ENCODE measurements at regions of chr14 and their contacts with region 1.

Region 1: GRCh38 chr14:50003213-50004031 is 110.5 kb downstream of the ARF6 start:
- DNase-seq: peak; percentile 41 to 89 (median 70)
- ATAC-seq: peak; percentile 13
- H3K4me3 ChIP-seq: peak overlapping the region; percentile 61
- H3K4me3 Mint-ChIP-seq: peak overlapping the region; percentile 91
- H3K27ac ChIP-seq: peak overlapping the region; percentile 95 to 96
- H3K27ac Mint-ChIP-seq: peak overlapping the region; percentile 95
- H3K4me1 ChIP-seq: peaks cover 65% of the 10 kb centered on the region
- H3K4me1 Mint-ChIP-seq: peaks cover 59% of the 10 kb centered on the region
- H3K27me3 ChIP-seq: no peaks in the 10 kb centered on the region
- H3K27me3 Mint-ChIP-seq: no peaks in the 10 kb centered on the region
- CTCF ChIP-seq: peak; percentile 26

Region 2: GRCh38 chr14:49796025-49796424 is 207.4 kb before region 1 on chr14:
- CTCF ChIA-PET with region 1: no interaction called
- POLR2A ChIA-PET with region 1: no interaction called
- intact Hi-C with region 1: no loop called
- DNase-seq: no peak
- ATAC-seq: no peak
- H3K4me3 ChIP-seq: no peak overlapping the region
- H3K4me3 Mint-ChIP-seq: no peak overlapping the region
- H3K27ac ChIP-seq: no peak overlapping the region
- H3K27ac Mint-ChIP-seq: no peak overlapping the region
- H3K4me1 ChIP-seq: no peaks in the 10 kb centered on the region
- H3K4me1 Mint-ChIP-seq: no peaks in the 10 kb centered on the region
- H3K27me3 ChIP-seq: no peaks in the 10 kb centered on the region
- H3K27me3 Mint-ChIP-seq: no peaks in the 10 kb centered on the region
- CTCF ChIP-seq: no peak

Region 3: DNA sequence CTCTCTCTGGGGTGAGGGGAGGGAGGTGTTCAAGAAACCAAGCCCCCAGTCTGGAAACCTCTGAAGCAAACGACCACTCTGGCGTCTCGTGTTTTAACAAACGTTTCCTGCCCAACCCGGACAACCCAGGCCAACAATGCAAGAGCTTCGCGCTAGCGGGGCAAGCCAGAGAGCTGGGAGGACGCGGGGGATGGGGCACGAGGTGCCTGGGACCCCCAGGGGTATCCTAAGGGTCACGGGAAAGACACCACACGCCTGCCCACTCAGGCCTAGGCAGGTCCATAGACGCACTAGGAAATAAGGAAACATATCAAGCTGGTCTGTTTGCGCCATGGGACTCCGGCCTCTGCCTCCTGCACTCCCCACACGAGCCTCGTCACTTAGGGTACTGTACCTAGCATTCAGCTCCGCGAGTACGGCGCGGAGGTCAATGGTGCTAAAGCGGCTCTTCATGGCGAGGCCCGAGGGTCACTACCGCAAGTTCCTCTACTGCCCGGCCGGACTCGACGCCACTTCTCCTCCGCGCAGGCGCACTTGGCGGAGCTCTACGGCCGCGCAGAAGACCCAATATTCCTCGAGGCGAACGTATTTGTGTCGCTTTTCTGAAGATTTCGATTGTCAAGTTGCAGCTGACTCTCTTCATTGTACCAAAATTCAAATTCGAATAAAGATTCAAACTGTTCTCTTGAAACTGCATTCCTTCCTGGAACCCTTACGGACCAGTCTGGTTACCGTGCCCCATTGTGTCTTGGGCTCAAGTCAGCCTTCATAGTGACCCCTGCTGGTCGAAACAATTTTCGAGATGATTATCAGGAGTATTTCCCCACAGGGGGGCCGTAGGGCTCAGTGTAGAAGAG is 150.9 kb before region 1 on chr14 and contains the start of gene NEMF:
- CTCF ChIA-PET with region 1: interaction called, 29 read pairs
- POLR2A ChIA-PET with region 1: interaction called, 31 read pairs
- intact Hi-C with region 1: no loop called
- DNase-seq: peak; percentile 67 to 91 (median 72)
- ATAC-seq: peak; percentile 75
- H3K4me3 ChIP-seq: peak within 1 kb of the TSS; percentile 97
- H3K4me3 Mint-ChIP-seq: peak within 1 kb of the TSS; percentile 99
- H3K27ac ChIP-seq: peak within 1 kb of the TSS; percentile 64 to 80
- H3K27ac Mint-ChIP-seq: peak within 1 kb of the TSS; percentile 91
- H3K4me1 ChIP-seq: peaks cover 17% of the 10 kb centered on the region
- H3K4me1 Mint-ChIP-seq: peaks cover 46% of the 10 kb centered on the region
- H3K27me3 ChIP-seq: no peaks in the 10 kb centered on the region
- H3K27me3 Mint-ChIP-seq: no peaks in the 10 kb centered on the region
- CTCF ChIP-seq: peak; percentile 89
- total RNA-seq, gene NEMF: 96.0 to 97.7 TPM

Region 4: DNA sequence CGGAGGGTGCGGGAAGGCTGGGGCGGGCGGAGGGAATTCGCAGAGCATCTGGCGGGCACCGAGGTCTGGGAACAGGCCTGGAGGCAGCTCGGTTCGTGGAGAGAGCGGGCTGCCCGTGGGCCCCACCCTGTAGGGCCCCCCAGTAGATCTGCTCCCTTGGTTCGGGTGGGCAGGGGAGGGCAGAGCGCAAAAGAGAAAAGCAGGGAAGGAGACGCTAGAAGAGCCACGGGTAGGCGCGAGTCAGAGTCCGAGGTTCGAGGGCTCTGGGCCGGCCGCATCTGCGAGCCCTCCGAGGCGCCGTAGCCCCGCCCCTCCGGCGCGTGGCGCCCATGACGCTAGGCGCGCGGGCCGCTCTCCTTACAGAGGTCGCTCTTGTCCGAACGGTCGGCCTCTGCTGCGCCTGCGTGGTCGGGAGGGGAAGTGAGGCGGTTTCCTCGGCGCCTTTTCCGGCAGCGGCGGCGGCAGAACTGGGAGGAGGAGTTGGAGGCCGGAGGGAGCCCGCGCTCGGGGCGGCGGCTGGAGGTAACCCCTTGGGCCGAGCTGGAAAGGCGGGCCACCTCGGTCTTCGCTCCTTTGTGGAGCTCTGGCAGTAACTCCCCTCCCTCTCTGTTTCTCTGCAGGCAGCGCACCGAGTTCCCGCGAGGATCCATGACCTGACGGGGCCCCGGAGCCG is 110.7 kb before region 1 on chr14 and contains the start of gene ARF6:
- CTCF ChIA-PET with region 1: interaction called, 4 read pairs
- POLR2A ChIA-PET with region 1: interaction called, 78 read pairs
- intact Hi-C with region 1: loop called (anchors 1 to 2 kb)
- DNase-seq: peak; percentile 86 to 98 (median 96)
- ATAC-seq: peak; percentile 69
- H3K4me3 ChIP-seq: peak within 1 kb of the TSS; percentile 96
- H3K4me3 Mint-ChIP-seq: peak within 1 kb of the TSS; percentile 98
- H3K27ac ChIP-seq: peak within 1 kb of the TSS; percentile 93 to 99
- H3K27ac Mint-ChIP-seq: peak within 1 kb of the TSS; percentile 96
- H3K4me1 ChIP-seq: peaks cover 19% of the 10 kb centered on the region
- H3K4me1 Mint-ChIP-seq: peaks cover 43% of the 10 kb centered on the region
- H3K27me3 ChIP-seq: no peaks in the 10 kb centered on the region
- H3K27me3 Mint-ChIP-seq: no peaks in the 10 kb centered on the region
- CTCF ChIP-seq: no peak
- total RNA-seq, gene ARF6: 67.2 to 69.7 TPM

Region 5: GRCh38 chr14:49946320-49947141 is 56.9 kb before region 1 on chr14:
- CTCF ChIA-PET with region 1: interaction called, 3 read pairs
- POLR2A ChIA-PET with region 1: interaction called, 40 read pairs
- intact Hi-C with region 1: loop called in 1 of 2 experiments (anchors 2 kb)
- DNase-seq: peak in 10 of 14 experiments; percentile 10 to 66 (median 26)
- ATAC-seq: peak; percentile 72
- H3K4me3 ChIP-seq: no peak overlapping the region
- H3K4me3 Mint-ChIP-seq: peak overlapping the region; percentile 56
- H3K27ac ChIP-seq: peak overlapping the region; percentile 69 to 86
- H3K27ac Mint-ChIP-seq: peak overlapping the region; percentile 88
- H3K4me1 ChIP-seq: peaks cover 66% of the 10 kb centered on the region
- H3K4me1 Mint-ChIP-seq: peaks cover 78% of the 10 kb centered on the region
- H3K27me3 ChIP-seq: no peaks in the 10 kb centered on the region
- H3K27me3 Mint-ChIP-seq: no peaks in the 10 kb centered on the region
- CTCF ChIP-seq: no peak

Region 6: DNA sequence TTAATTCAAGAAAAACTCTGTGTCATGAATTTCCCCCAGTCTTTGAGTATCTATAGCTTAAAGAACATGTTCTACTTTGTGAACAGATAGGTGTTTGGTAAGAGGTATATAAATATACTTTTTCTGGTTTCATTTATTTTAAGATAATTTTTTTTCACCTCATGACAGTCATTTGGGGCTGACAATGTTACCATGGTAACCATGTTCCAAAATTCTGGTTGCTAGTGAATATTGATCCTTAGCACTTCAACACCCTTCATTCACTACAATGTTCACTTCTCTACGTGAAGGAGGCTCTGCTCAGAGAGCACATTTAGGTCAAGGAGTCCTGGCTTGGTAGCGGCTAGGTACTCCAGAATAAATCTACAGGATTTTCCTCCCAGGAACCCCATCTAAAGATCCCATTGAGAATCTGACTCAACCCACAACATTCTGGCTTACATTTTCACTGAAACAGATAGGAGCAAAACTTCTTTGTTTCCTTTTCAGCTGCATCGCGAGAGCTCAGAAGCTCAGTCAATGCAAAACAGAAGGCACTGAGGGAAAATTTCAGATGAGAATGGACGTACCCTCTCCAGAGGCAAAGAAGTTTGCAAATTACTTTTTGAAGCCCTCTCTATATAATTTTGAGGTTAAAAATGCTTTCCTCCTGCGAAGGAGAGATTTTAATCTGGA is 16.9 kb before region 1 on chr14:
- CTCF ChIA-PET with region 1: no interaction called
- POLR2A ChIA-PET with region 1: interaction called, 10 read pairs
- intact Hi-C with region 1: no loop called
- DNase-seq: no peak
- ATAC-seq: no peak
- H3K4me3 ChIP-seq: no peak overlapping the region
- H3K4me3 Mint-ChIP-seq: peak overlapping the region; percentile 30
- H3K27ac ChIP-seq: no peak overlapping the region
- H3K27ac Mint-ChIP-seq: peak overlapping the region; percentile 68
- H3K4me1 ChIP-seq: peaks cover 23% of the 10 kb centered on the region
- H3K4me1 Mint-ChIP-seq: peaks cover 47% of the 10 kb centered on the region
- H3K27me3 ChIP-seq: no peaks in the 10 kb centered on the region
- H3K27me3 Mint-ChIP-seq: no peaks in the 10 kb centered on the region
- CTCF ChIP-seq: no peak

Region 7: DNA sequence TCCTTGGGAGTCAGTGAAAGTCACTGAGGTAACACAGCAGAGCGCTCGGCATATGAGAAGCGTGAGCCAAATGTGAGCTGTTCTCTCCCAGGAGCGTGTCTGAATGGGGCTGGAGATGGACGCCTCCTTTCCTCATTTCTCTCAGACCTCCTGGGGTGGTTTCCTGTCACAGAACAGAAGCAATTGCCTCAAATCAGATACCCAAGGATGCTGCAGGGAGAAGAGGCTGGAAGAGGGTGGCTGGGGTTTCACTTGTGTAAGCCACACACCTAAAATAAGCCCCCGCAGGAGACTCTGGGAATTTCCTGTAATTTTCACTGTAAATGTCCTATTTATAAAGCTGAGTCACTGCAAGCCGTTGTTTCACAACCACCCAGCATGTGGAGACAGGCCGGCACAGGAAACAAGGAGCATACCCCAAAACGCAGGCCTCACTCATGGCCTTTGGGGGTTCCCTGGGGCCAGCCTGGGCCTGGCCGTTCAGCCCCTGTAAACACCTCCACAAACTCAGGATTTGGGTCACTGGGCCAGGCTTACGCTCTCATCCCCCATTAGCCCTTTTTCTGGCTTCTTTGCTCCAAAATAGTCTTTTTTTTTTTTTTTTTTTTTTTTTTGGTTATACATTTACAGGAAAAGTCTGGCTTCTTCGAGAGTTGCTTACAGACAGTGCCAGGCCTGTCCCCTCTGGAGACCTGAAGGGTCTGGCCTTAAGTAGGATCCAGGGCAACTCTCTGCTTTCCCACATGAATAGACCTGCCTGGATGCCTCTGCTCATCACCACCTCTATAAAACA is 57.6 kb after region 1 on chr14:
- CTCF ChIA-PET with region 1: interaction called, 13 read pairs
- POLR2A ChIA-PET with region 1: interaction called, 109 read pairs
- intact Hi-C with region 1: loop called (anchors 1 to 5 kb)
- DNase-seq: peak in 6 of 14 experiments; percentile 17 to 79 (median 57)
- ATAC-seq: no peak
- H3K4me3 ChIP-seq: peak overlapping the region; percentile 48
- H3K4me3 Mint-ChIP-seq: peak overlapping the region; percentile 70
- H3K27ac ChIP-seq: peak overlapping the region; percentile 89 to 94
- H3K27ac Mint-ChIP-seq: peak overlapping the region; percentile 91
- H3K4me1 ChIP-seq: peaks cover 73% of the 10 kb centered on the region
- H3K4me1 Mint-ChIP-seq: peaks cover 73% of the 10 kb centered on the region
- H3K27me3 ChIP-seq: no peaks in the 10 kb centered on the region
- H3K27me3 Mint-ChIP-seq: no peaks in the 10 kb centered on the region
- CTCF ChIP-seq: no peak

Region 8: GRCh38 chr14:50109342-50109741 is 105.9 kb after region 1 on chr14:
- CTCF ChIA-PET with region 1: interaction called, 4 read pairs
- POLR2A ChIA-PET with region 1: interaction called, 10 read pairs
- intact Hi-C with region 1: loop called in 1 of 2 experiments (anchors 2 kb)
- DNase-seq: no peak
- ATAC-seq: no peak
- H3K4me3 ChIP-seq: no peak overlapping the region
- H3K4me3 Mint-ChIP-seq: no peak overlapping the region
- H3K27ac ChIP-seq: no peak overlapping the region
- H3K27ac Mint-ChIP-seq: no peak overlapping the region
- H3K4me1 ChIP-seq: peaks cover under 1% of the 10 kb centered on the region
- H3K4me1 Mint-ChIP-seq: peaks cover 30% of the 10 kb centered on the region
- H3K27me3 ChIP-seq: no peaks in the 10 kb centered on the region
- H3K27me3 Mint-ChIP-seq: no peaks in the 10 kb centered on the region
- CTCF ChIP-seq: no peak

Measured in CD4-positive, alpha-beta T cell (primary cell).